GM18951 (cell line): ENCODE measurements at regions of chr5 and their contacts with region 1.

Region 1: DNA sequence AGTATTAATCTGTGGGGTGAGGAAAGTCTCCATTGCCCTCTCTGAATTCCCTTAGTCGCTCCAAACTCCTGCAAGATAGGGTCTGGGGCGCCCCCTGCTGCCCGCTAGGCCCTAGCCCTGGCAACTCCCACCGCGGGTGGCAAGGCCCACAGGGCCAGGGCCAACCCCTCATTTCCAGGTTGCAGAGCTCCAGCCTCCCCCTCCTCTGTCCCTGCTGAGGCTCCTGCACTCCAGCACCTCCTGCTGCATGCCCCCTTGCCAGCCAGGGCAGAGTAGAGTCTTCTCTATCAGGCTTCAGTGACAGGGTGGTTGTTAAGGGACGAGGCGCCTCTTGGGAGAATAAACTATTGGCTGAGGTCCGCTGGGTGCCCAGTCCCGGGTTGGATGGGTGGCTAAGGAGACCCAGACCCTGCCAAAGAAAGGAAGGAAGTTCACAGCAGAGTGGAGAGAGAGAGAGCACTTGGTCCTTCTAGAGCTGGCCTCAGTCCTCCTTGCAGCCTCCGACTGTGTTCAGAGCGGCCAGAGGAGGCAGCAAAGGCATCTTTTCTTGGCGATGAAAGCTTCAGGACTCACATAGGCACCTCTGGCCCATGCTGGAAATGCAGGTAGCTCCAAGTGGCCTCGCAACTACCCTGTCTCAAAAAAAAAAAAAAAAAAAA is 45.6 kb downstream of the SAR1B start:
- POLR2A ChIP-seq: no peak

Region 2: DNA sequence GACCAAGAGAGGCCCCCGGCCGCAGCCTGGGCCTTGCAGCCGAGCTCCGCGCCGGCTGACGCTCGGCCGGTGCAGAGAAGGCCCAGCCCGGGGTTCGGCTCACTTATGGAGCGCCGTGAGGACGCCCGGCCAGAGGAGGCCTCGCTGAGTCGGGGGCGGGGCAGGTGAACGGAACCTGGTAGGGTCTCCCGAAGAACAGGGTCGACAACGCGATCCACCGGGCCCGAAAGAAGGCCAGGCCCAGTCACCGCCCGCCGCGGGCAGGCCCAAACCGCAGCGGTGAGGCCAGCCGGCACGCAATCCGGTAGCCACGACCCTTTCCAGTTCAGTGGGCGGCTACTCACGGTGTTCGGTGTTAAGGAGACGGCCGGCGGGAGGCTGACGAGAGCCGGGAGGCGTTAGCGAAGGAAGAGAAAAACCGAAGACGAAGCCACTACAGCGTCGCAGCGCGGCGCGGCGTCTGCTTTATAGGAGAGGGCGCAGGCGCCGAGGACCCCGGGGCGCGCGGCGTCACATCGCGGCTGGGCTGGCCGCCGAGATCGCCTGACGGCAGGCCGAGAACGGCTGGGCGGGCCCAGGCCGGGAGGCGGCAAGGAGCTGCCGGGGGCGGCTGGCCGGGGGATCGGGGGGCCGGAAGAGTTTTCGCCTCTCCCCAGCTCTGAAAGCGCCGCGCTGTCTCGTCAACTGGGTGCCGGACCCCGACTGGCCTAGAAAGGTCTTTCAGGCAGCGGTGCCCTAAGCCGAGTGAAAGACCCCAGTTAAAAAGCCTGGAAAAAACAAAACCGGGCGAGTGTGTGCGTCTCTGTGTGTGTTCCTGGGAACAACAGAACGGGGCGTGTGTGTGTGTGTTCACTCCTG is 410.3 kb before region 1 on chr5 and contains the start of gene SKP1:
- in situ Hi-C with region 1: loop called (anchors 10 kb)
- POLR2A ChIP-seq: peak; percentile 99